Posterior cingulate gyrus (tissue), 11 donors: ENCODE measurements at regions of chrX and their contacts with region 1.

Region 1: GRCh38 chrX:3651276-3651675 is 62.2 kb downstream of the PRKX start:
- DNase-seq: no peak

Region 2: DNA sequence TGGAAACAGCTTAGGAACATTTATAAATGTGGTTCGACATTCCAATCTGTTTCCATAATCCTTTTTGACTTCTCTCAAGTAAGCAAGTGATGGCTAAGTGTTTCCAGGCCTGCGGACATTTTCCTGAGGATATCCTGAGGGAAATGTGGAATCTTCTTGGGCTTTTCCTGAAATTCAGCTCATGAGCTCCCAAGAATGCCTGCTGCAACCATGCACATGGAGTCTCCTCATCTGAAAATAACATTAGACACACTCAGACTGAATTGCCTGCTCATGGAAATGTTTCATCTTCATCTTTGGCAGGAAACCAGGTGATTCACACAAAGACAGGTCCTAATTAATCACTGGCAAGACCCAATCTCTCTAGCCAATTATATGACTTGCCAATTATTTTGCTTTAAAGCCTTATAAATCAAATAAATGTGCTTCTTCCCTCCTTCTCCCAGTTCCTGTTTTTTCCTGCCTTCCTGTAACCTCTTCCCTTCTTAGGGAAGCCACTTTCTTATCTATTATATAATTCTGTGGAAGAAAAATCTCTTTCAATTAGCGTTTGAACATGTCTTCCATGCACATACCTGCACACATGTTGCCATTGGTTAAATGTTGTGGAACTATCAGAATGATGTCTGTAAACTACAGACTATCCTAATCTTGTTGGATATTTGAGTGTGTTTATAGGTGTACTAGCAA is 200.2 kb before region 1 on chrX:
- intact Hi-C with region 1: no loop called
- DNase-seq: no peak

Region 3: GRCh38 chrX:3763111-3763510 is 111.8 kb after region 1 on chrX:
- intact Hi-C with region 1: no loop called
- DNase-seq: no peak

Region 4: DNA sequence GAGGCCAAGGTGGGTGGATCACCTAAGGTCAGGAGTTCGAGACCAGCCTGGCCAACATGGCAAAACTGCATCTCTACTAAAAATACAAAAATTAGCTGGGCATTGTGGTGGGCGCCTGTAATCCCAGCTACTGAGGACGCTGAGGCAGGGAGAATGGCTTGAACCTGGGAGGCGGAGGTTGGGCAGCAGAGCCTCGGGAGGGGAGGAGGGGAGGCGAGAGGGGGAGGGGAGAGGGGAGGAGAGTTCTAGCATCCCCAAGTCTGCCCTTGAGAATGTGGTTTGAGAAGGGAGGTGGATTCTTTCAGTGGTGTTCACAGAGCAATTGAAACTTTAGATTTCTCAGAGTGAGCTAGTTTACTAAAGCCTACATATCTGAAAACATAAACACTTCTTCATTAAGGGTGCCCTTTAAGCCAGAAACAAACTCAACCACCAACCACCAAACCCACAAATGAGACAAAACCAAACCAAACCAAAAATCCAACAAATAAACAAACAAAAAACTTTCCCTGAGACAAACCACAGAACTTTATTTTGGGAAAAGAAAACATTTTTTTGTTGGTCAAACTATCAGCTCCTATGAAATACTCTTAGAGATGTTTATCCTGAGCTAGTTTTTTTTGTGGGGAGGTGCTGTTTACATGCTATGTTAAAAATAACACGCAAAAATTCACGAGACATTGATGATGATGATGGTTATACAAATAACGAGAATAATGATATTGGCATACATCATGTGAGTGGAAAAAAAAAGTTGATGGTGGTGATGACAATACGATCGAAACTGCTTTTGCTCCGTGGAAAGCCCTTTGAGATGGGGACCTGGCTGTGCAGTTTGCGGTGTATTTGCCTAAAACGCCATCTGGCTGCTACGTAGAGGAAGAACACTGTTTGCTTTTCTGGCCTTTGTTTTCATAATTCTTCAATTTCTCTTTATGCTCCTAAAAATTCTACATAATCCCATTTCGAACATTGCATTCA is 160.3 kb after region 1 on chrX:
- intact Hi-C with region 1: loop called (anchors 2 kb)
- DNase-seq: peak in 5 of 10 donors; percentile 10 to 77 (median 26)